CD4-positive, alpha-beta T cell (primary cell): ENCODE measurements at regions of chr20 and their contacts with region 1.

Region 1: DNA sequence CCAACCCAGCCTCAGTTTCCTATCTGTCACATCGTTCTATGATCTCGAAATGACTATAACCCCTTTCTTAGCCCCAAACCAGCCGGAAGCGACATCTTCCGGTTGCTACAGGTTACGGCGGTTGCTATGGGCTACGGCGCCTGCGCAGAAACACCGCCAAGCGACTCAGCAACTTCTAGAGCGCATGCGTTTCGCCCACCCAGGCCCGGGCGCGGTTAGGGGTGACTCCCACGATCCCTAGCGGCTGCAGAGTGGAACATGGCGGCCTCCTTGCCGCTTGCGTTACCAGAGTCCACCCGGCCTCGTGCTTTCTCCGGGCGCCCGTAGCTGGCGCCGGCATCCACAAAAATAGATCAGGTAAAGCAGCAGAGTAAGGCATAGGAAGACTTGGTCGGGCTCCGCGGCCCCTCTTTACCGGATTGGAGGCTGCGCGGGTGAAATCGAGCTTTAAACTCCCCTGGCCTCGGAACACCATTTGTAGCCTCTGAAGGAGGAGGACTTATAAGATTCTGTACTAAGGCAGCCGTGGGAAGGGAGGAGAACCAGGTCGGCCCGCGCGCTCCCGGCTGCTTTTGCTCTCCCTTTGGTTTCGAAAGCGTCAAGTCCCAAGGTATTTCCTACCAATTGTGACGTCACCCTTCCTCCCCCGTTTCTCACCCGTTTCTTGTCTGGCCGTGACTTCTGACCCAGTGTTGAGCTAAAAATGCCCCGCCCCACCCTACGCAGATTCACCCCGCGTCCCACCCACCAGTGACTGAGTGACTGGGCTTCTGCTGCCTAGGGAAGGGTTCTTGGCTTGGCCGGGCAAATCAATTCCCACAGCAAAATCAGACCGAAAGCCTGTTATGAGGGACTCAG is 3.5 kb downstream of the SDCBP2 start:
- DNase-seq: peak; percentile 98 to 100 (median 99)
- ATAC-seq: peak; percentile 84
- H3K4me3 ChIP-seq: peak overlapping the region; percentile 95
- H3K4me3 Mint-ChIP-seq: no peak overlapping the region
- H3K27ac ChIP-seq: peak overlapping the region; percentile 95 to 98
- H3K27ac Mint-ChIP-seq: no peak overlapping the region
- H3K4me1 ChIP-seq: peaks cover 55% of the 10 kb centered on the region
- H3K4me1 Mint-ChIP-seq: peaks cover 13% of the 10 kb centered on the region
- H3K27me3 ChIP-seq: no peaks in the 10 kb centered on the region
- H3K27me3 Mint-ChIP-seq: no peaks in the 10 kb centered on the region
- CTCF ChIP-seq: peak; percentile 13

Region 2: DNA sequence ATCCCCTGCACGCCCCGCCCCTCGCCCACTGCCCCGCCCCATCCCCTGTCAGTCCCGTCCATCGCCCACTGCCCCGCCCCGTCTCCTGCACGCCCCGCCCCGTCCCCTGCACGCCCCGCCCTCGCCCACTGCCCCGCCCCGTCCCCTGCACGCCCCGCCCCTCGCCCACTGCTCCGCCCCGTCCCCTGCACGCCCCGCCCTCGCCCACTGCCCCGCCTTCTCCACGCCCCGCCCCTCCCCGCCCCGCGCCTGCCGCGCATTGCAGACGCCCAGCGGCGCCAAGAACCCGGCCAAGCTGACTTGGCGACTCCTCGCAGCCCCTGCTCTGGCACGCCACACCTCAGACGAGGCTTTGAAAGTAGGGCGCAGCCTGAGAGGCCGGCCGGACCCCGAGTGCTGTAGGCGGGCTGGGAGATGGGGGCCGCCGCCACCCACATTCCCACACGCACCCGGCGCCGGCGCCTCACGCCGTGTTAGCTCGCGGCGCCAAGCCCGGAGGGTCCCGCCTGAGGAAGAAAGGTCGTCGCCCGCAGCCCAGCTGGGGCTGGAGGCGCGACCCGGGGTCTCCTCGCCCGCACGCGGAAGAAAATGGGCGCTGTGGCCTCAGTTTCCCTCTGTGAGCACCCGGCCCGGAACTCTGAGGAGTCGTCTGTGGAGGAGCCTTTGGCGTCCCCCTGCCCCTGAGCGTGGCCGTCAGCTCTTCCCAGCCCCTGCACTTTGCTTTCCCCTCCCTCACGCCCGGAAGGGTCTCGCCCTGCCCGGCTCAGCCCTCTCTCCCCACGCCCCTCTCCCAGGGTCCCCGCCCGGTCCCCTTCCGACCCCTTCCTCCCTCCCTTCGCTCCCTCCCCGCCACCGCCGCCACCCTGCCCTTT is 99.4 kb before region 1 on chr20 and contains the start of gene RAD21L1:
- CTCF ChIA-PET with region 1: no interaction called
- POLR2A ChIA-PET with region 1: interaction called, 3 read pairs
- intact Hi-C with region 1: loop called in 1 of 2 experiments (anchors 5 kb)
- DNase-seq: peak; percentile 73 to 92 (median 80)
- ATAC-seq: peak; percentile 80
- H3K4me3 ChIP-seq: peak within 1 kb of the TSS; percentile 77
- H3K4me3 Mint-ChIP-seq: peak within 1 kb of the TSS; percentile 92
- H3K27ac ChIP-seq: peak within 1 kb of the TSS in 1 of 2 donors; percentile 22
- H3K27ac Mint-ChIP-seq: peak within 1 kb of the TSS; percentile 53
- H3K4me1 ChIP-seq: peaks cover 18% of the 10 kb centered on the region
- H3K4me1 Mint-ChIP-seq: peaks cover 19% of the 10 kb centered on the region
- H3K27me3 ChIP-seq: peaks cover 0 to 15% of the 10 kb centered on the region in 2 experiments
- H3K27me3 Mint-ChIP-seq: peaks cover 21% of the 10 kb centered on the region
- CTCF ChIP-seq: no peak
- total RNA-seq, gene RAD21L1: 0.58 TPM in 1 of 2 experiments, not detected in the other

Region 3: GRCh38 chr20:1254254-1254653 is 71.1 kb before region 1 on chr20:
- CTCF ChIA-PET with region 1: no interaction called
- POLR2A ChIA-PET with region 1: no interaction called
- intact Hi-C with region 1: no loop called
- DNase-seq: no peak
- ATAC-seq: no peak
- H3K4me3 ChIP-seq: no peak overlapping the region
- H3K4me3 Mint-ChIP-seq: no peak overlapping the region
- H3K27ac ChIP-seq: no peak overlapping the region
- H3K27ac Mint-ChIP-seq: no peak overlapping the region
- H3K4me1 ChIP-seq: no peaks in the 10 kb centered on the region
- H3K4me1 Mint-ChIP-seq: peaks cover 8% of the 10 kb centered on the region
- H3K27me3 ChIP-seq: peaks cover 0 to 4% of the 10 kb centered on the region in 2 experiments
- H3K27me3 Mint-ChIP-seq: peaks cover 12% of the 10 kb centered on the region
- CTCF ChIP-seq: no peak

Region 4: DNA sequence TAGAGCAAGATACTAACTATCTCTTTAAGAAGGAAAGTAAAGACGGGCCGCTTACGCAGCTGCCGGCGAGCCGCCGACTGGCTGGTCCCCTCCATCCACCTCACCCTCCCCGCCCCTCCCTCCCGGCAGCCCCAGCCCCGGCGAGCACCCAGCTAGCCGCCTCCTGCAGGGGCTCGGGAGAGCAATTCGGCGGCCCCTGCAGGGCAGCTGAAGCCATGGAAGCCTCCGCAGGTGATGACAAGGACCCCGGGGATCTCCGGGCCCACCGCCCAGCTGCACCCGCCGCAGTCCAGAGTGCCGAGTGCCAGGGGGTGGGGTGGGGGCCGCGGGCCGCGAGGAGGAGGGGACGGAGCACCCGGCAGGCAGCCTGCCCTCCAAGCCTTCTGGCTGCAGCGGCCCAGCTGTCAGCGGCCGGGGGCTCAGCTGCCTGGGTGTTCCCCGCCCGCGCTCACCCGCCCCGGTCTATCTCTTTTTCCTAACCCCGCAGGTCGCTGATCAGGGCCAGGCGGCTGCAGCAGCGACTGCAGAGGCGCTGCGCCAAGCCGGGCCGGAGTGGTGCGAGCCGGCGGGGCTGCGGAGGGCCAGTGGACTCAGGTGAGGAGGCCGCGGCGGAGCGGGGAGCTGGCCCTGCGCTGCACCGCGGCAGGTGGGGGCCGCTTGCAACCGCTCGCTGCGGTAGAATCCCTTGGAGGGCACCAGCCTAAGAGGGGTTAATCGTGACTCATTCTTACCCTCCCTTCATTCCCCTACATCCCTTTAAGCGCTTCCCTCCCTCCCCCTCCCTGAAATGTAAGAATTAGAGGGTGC is 59.0 kb before region 1 on chr20 and contains the start of gene SNPH:
- CTCF ChIA-PET with region 1: no interaction called
- POLR2A ChIA-PET with region 1: no interaction called
- intact Hi-C with region 1: loop called in 1 of 2 experiments (anchors 10 kb)
- DNase-seq: peak; percentile 61 to 90 (median 72)
- ATAC-seq: peak; percentile 80
- H3K4me3 ChIP-seq: peak within 1 kb of the TSS; percentile 60
- H3K4me3 Mint-ChIP-seq: peak within 1 kb of the TSS; percentile 90
- H3K27ac ChIP-seq: peak within 1 kb of the TSS; percentile 50 to 72
- H3K27ac Mint-ChIP-seq: peak within 1 kb of the TSS; percentile 90
- H3K4me1 ChIP-seq: peaks cover 35% of the 10 kb centered on the region
- H3K4me1 Mint-ChIP-seq: peaks cover 77% of the 10 kb centered on the region
- H3K27me3 ChIP-seq: no peaks in the 10 kb centered on the region
- H3K27me3 Mint-ChIP-seq: no peaks in the 10 kb centered on the region
- CTCF ChIP-seq: no peak
- total RNA-seq, gene SNPH: 12.8 to 13.0 TPM

Region 5: DNA sequence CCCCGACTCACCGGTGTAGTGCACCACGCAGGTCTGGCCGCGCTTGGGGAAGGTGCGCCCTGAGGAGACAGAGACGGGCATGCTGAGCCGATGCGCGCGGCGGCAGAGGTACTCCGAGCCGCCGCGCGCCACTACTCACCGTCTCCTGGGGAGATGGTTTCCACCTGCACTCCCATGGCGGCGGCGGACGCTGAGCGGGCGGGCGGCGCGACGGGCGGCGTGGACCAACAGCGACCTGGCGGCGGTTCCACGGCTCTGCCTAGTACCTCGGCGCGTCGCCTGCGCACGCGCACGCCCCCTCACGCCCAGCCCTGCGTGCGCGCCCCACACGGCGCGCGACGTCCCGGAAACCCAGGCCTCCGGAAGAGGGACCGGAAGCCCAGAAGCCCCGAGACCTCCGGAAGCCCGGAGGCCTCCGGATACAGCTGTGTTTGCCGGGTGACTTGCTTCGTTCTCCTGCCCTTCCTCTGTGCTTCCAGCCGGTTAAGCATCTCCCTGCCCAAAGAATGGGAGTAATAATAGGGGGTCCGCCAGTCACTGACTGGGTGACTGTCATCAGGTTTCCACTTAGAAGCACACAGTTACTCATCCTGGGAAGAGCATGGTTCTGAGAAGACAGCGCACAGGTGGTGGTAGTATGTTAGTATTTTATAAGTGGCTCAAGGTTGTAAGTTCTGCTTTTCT is 67.6 kb after region 1 on chr20 and contains the start of gene FKBP1A:
- CTCF ChIA-PET with region 1: no interaction called
- POLR2A ChIA-PET with region 1: interaction called, 11 read pairs
- intact Hi-C with region 1: loop called (anchors 1 kb)
- DNase-seq: peak; percentile 84 to 97 (median 92)
- ATAC-seq: peak; percentile 83
- H3K4me3 ChIP-seq: peak within 1 kb of the TSS; percentile 85
- H3K4me3 Mint-ChIP-seq: peak within 1 kb of the TSS; percentile 98
- H3K27ac ChIP-seq: peak within 1 kb of the TSS; percentile 37 to 72
- H3K27ac Mint-ChIP-seq: peak within 1 kb of the TSS; percentile 89
- H3K4me1 ChIP-seq: peaks cover 60% of the 10 kb centered on the region
- H3K4me1 Mint-ChIP-seq: peaks cover 61% of the 10 kb centered on the region
- H3K27me3 ChIP-seq: no peaks in the 10 kb centered on the region
- H3K27me3 Mint-ChIP-seq: no peaks in the 10 kb centered on the region
- CTCF ChIP-seq: no peak
- total RNA-seq, gene FKBP1A: 43.3 to 45.4 TPM

Region 6: GRCh38 chr20:1437235-1437904 is 112.0 kb after region 1 on chr20:
- CTCF ChIA-PET with region 1: interaction called, 6 read pairs
- POLR2A ChIA-PET with region 1: interaction called, 9 read pairs
- intact Hi-C with region 1: loop called in 1 of 2 experiments (anchors 2 kb)
- DNase-seq: peak; percentile 68 to 90 (median 75)
- ATAC-seq: peak; percentile 70
- H3K4me3 ChIP-seq: no peak overlapping the region
- H3K4me3 Mint-ChIP-seq: no peak overlapping the region
- H3K27ac ChIP-seq: no peak overlapping the region
- H3K27ac Mint-ChIP-seq: no peak overlapping the region
- H3K4me1 ChIP-seq: peaks cover 27% of the 10 kb centered on the region
- H3K4me1 Mint-ChIP-seq: peaks cover 56% of the 10 kb centered on the region
- H3K27me3 ChIP-seq: no peaks in the 10 kb centered on the region
- H3K27me3 Mint-ChIP-seq: no peaks in the 10 kb centered on the region
- CTCF ChIP-seq: peak; percentile 90